ENCODE measurements at regions of chr19 and their contacts with region 1.

Region 1: GRCh38 chr19:47348819-47349795 is at the start of gene DHX34:
- DNase-seq: peak; percentile 98 to 100 (median 99)
- ATAC-seq: peak; percentile 98
- H3K4me3 ChIP-seq: peak within 1 kb of the TSS; percentile 83
- H3K4me3 Mint-ChIP-seq: peak within 1 kb of the TSS; percentile 92
- H3K27ac ChIP-seq: peak within 1 kb of the TSS; percentile 65 to 75
- H3K27ac Mint-ChIP-seq: peak within 1 kb of the TSS; percentile 83
- H3K4me1 ChIP-seq: peaks cover 33% of the 10 kb centered on the region
- H3K4me1 Mint-ChIP-seq: peaks cover 39% of the 10 kb centered on the region
- H3K27me3 ChIP-seq: no peaks in the 10 kb centered on the region
- H3K27me3 Mint-ChIP-seq: no peaks in the 10 kb centered on the region
- CTCF ChIP-seq: peak; percentile 89
- total RNA-seq, gene DHX34: 6.8 to 8.2 TPM

Region 2: GRCh38 chr19:47273313-47273977 is 75.7 kb before region 1 on chr19:
- CTCF ChIA-PET with region 1: interaction called, 10 read pairs
- POLR2A ChIA-PET with region 1: interaction called, 8 read pairs
- intact Hi-C with region 1: loop called in 1 of 2 experiments (anchors 1 kb)
- DNase-seq: peak; percentile 82 to 95 (median 88)
- ATAC-seq: peak; percentile 63
- H3K4me3 ChIP-seq: peak overlapping the region; percentile 100
- H3K4me3 Mint-ChIP-seq: peak overlapping the region; percentile 100
- H3K27ac ChIP-seq: peak overlapping the region; percentile 92 to 99
- H3K27ac Mint-ChIP-seq: peak overlapping the region; percentile 99
- H3K4me1 ChIP-seq: peaks cover 24% of the 10 kb centered on the region
- H3K4me1 Mint-ChIP-seq: peaks cover 28% of the 10 kb centered on the region
- H3K27me3 ChIP-seq: no peaks in the 10 kb centered on the region
- H3K27me3 Mint-ChIP-seq: no peaks in the 10 kb centered on the region
- CTCF ChIP-seq: no peak

Region 3: GRCh38 chr19:47391510-47392223 is 42.6 kb after region 1 on chr19:
- CTCF ChIA-PET with region 1: interaction called, 11 read pairs
- POLR2A ChIA-PET with region 1: interaction called, 4 read pairs
- intact Hi-C with region 1: no loop called
- DNase-seq: peak; percentile 63 to 88 (median 78)
- ATAC-seq: peak; percentile 90
- H3K4me3 ChIP-seq: no peak overlapping the region
- H3K4me3 Mint-ChIP-seq: no peak overlapping the region
- H3K27ac ChIP-seq: no peak overlapping the region
- H3K27ac Mint-ChIP-seq: no peak overlapping the region
- H3K4me1 ChIP-seq: peaks cover 7% of the 10 kb centered on the region
- H3K4me1 Mint-ChIP-seq: peaks cover 6% of the 10 kb centered on the region
- H3K27me3 ChIP-seq: peaks cover 0 to 2% of the 10 kb centered on the region in 2 experiments
- H3K27me3 Mint-ChIP-seq: peaks cover 19% of the 10 kb centered on the region
- CTCF ChIP-seq: peak; percentile 88

Region 4: GRCh38 chr19:47428177-47428894 is 79.2 kb after region 1 on chr19:
- CTCF ChIA-PET with region 1: interaction called, 7 read pairs
- POLR2A ChIA-PET with region 1: no interaction called
- intact Hi-C with region 1: loop called in 1 of 2 experiments (anchors 5 kb)
- DNase-seq: peak; percentile 50 to 96 (median 75)
- ATAC-seq: peak; percentile 91
- H3K4me3 ChIP-seq: peak overlapping the region; percentile 29
- H3K4me3 Mint-ChIP-seq: no peak overlapping the region
- H3K27ac ChIP-seq: no peak overlapping the region
- H3K27ac Mint-ChIP-seq: no peak overlapping the region
- H3K4me1 ChIP-seq: peaks cover 38% of the 10 kb centered on the region
- H3K4me1 Mint-ChIP-seq: peaks cover 13% of the 10 kb centered on the region
- H3K27me3 ChIP-seq: peaks cover 36 to 43% of the 10 kb centered on the region in 2 experiments
- H3K27me3 Mint-ChIP-seq: peaks cover 56% of the 10 kb centered on the region
- CTCF ChIP-seq: no peak

Region 5: DNA sequence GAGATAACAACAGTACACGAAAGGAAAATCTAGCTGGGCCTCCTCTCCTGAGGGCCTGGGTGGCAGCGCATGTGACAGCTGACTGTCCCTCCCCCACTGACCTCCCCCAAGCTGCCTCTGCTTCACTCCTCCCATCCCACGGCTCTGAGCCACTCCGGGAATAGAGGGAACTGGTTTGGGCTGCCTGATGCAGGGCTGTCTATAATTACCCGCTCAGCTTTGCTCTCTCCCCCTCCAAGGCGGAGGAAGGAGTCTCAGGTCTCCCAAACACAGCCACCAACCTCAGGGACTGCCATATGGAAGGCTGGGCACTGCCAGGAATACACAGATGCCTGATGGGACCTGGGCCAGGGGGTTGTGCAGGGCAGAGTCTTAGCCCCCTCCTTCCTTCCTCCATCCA is 157.9 kb after region 1 on chr19:
- CTCF ChIA-PET with region 1: no interaction called
- POLR2A ChIA-PET with region 1: no interaction called
- intact Hi-C with region 1: no loop called
- DNase-seq: no peak
- ATAC-seq: no peak
- H3K4me3 ChIP-seq: no peak overlapping the region
- H3K4me3 Mint-ChIP-seq: no peak overlapping the region
- H3K27ac ChIP-seq: no peak overlapping the region
- H3K27ac Mint-ChIP-seq: no peak overlapping the region
- H3K4me1 ChIP-seq: peaks cover 41% of the 10 kb centered on the region
- H3K4me1 Mint-ChIP-seq: peaks cover 37% of the 10 kb centered on the region
- H3K27me3 ChIP-seq: no peaks in the 10 kb centered on the region
- H3K27me3 Mint-ChIP-seq: no peaks in the 10 kb centered on the region
- CTCF ChIP-seq: no peak

Region 6: GRCh38 chr19:47682939-47683338 is 333.8 kb after region 1 on chr19:
- CTCF ChIA-PET with region 1: no interaction called
- POLR2A ChIA-PET with region 1: no interaction called
- intact Hi-C with region 1: no loop called
- DNase-seq: no peak
- ATAC-seq: no peak
- H3K4me3 ChIP-seq: no peak overlapping the region
- H3K4me3 Mint-ChIP-seq: no peak overlapping the region
- H3K27ac ChIP-seq: no peak overlapping the region
- H3K27ac Mint-ChIP-seq: no peak overlapping the region
- H3K4me1 ChIP-seq: no peaks in the 10 kb centered on the region
- H3K4me1 Mint-ChIP-seq: no peaks in the 10 kb centered on the region
- H3K27me3 ChIP-seq: no peaks in the 10 kb centered on the region
- H3K27me3 Mint-ChIP-seq: no peaks in the 10 kb centered on the region
- CTCF ChIP-seq: no peak

Region 7: DNA sequence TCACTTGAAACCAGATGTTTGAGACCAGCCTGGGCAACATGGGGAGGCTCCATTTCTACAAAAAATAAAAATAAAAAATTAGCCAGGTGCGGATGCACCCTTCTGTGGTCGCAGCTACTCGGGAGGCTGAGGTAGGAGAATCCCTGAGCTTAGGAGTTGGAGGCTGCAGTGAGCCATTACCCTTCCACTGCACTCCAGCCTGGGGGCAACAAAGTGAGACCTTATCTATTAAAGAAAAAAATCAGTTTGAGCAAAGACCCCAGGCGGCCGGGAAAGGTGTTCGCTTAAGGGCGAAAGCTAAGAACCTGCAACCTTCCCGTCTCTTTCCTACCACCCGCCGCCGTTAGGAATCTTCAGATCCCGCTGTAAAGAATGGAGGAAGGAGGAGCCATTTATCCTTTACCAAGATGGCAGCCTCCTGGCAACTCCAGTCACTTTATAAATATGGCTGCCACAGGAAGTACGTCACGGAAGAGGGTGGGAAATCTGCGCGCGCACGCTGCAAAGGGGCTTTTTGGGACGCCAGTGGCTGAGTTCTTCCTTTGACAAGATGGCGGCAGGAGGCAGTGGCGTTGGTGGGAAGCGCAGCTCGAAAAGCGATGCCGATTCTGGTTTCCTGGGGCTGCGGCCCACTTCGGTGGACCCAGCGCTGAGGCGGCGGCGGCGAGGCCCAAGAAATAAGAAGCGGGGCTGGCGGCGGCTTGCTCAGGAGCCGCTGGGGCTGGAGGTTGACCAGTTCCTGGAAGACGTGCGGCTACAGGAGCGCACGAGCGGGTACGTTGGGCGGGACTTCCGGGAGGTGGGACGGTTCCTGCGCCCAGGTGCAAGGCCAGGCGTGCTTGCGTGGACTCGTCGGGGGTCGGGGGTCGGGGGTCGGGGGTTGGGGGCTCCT is 396.1 kb after region 1 on chr19 and contains the start of gene NOP53:
- CTCF ChIA-PET with region 1: no interaction called
- POLR2A ChIA-PET with region 1: interaction called, 5 read pairs
- intact Hi-C with region 1: loop called in 1 of 2 experiments (anchors 1 kb)
- DNase-seq: peak; percentile 94 to 99 (median 97)
- ATAC-seq: peak; percentile 80
- H3K4me3 ChIP-seq: peak within 1 kb of the TSS; percentile 59
- H3K4me3 Mint-ChIP-seq: peak within 1 kb of the TSS; percentile 98
- H3K27ac ChIP-seq: peak within 1 kb of the TSS; percentile 93 to 98
- H3K27ac Mint-ChIP-seq: peak within 1 kb of the TSS; percentile 94
- H3K4me1 ChIP-seq: peaks cover 66% of the 10 kb centered on the region
- H3K4me1 Mint-ChIP-seq: peaks cover 39% of the 10 kb centered on the region
- H3K27me3 ChIP-seq: no peaks in the 10 kb centered on the region
- H3K27me3 Mint-ChIP-seq: no peaks in the 10 kb centered on the region
- CTCF ChIP-seq: no peak
- total RNA-seq, gene NOP53: 1,074 to 1,154 TPM

Measured in CD4-positive, alpha-beta T cell (primary cell).